Activated naive CD4-positive, alpha-beta T cell treated with anti-CD3 and anti-CD28 coated beads for 36 hours (primary cell): ENCODE measurements at regions of chr9 and their contacts with region 1.

Region 1: DNA sequence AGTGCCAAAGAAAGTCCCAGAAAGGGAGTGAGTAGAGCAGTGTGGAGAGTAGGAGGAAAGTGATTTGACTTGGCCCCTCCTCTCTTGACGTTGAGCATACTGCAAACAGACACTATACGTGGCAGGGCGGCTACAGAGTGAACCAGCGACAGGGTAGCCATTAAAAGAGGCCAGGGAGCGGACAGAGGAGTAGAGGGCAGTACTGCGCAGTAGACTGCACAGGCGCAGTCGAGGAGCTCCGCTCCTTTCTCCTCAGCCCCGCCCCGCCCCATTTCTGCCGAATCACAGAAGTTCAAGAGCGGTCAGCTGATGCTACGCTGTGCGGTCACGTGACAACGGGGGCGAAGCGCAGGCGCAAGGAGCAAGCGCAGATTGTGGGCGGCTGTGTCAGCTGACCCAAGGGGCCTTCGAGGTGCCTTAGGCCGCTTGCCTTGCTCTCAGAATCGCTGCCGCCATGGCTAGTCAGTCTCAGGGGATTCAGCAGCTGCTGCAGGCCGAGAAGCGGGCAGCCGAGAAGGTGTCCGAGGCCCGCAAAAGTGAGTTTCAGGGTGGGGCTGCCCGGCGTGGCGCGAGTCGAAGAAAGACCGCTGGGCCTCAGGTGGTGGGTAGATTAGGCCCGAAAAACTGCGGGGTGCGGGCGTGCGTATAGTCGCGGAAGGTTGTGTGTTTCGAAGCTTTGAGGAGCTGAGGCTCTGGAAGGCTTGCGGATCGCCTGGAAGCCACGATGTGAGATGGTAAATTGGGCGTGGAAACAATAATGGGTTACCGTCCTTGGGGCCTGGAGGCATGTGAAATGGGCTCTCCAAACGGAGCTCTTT is at the start of gene ATP6V1G1:
- DNase-seq: peak; percentile 100
- H3K4me3 Mint-ChIP-seq: peak within 1 kb of the TSS; percentile 92
- H3K27ac Mint-ChIP-seq: peak within 1 kb of the TSS; percentile 96
- H3K4me1 Mint-ChIP-seq: peaks cover 43% of the 10 kb centered on the region
- H3K27me3 Mint-ChIP-seq: no peaks in the 10 kb centered on the region
- total RNA-seq, gene ATP6V1G1: 26.7 to 28.8 TPM

Region 2: GRCh38 chr9:114348906-114349482 is 238.6 kb before region 1 on chr9:
- CTCF ChIA-PET with region 1: no interaction called
- intact Hi-C with region 1: loop called (anchors 1 kb)
- DNase-seq: peak; percentile 98
- H3K4me3 Mint-ChIP-seq: peak overlapping the region; percentile 24
- H3K27ac Mint-ChIP-seq: peak overlapping the region; percentile 98
- H3K4me1 Mint-ChIP-seq: peaks cover 49% of the 10 kb centered on the region
- H3K27me3 Mint-ChIP-seq: no peaks in the 10 kb centered on the region

Region 3: DNA sequence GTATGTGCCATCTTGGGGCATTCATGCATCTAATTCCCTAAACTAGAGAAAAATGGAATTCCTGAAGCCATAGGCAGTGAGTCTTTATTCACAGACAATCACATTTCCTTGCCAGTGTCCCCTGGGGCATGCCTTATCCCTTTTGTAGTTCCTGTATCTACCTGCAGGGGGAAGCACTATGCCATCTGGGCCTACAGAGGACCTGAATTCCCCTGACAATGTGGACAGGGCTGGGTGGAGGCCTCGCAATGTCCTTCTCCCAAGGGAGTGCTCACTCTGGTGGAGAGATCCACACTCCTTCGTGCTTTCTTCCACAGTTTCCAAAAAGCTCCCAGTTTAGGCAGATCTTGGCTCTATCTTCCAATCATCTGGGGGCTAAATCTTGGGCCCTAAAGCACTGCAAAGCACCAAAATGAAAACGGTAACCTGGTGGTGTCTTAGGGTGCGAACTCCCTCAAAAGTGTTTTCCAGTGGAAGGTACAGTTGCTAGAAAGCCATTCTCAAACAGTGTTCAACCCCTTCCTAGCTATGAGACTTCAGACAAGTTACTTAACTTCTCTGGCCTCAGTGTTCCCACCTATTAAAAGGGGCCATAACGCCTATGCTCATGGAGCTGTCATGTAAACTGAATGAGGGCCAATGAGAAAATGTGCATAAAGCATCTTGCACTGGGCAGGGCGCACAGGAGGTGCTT is 99.8 kb before region 1 on chr9:
- CTCF ChIA-PET with region 1: interaction called, 10 read pairs
- intact Hi-C with region 1: loop called (anchors 2 kb)
- DNase-seq: peak; percentile 81
- H3K4me3 Mint-ChIP-seq: no peak overlapping the region
- H3K27ac Mint-ChIP-seq: no peak overlapping the region
- H3K4me1 Mint-ChIP-seq: peaks cover 19% of the 10 kb centered on the region
- H3K27me3 Mint-ChIP-seq: no peaks in the 10 kb centered on the region

Region 4: DNA sequence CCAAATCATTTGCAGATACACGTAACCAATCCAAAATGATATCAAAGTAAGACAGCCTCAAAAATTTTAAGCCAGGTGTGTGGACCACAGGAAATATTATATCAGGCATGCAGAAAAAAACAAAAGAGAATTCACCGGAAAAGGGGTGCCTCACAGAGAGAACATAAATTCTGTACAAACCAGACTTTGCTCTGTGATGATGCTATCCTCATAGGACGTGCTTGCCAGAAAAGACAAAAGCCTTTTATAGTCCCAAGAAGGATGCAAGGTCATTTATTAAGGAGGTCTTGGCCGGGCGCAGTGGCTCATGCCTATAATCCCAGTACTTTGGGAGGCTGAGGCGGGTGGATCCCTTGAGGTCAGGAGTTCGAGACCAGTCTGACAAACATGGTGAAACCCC is 16.9 kb before region 1 on chr9:
- CTCF ChIA-PET with region 1: no interaction called
- intact Hi-C with region 1: no loop called
- DNase-seq: no peak
- H3K4me3 Mint-ChIP-seq: no peak overlapping the region
- H3K27ac Mint-ChIP-seq: no peak overlapping the region
- H3K4me1 Mint-ChIP-seq: no peaks in the 10 kb centered on the region
- H3K27me3 Mint-ChIP-seq: no peaks in the 10 kb centered on the region

Region 5: DNA sequence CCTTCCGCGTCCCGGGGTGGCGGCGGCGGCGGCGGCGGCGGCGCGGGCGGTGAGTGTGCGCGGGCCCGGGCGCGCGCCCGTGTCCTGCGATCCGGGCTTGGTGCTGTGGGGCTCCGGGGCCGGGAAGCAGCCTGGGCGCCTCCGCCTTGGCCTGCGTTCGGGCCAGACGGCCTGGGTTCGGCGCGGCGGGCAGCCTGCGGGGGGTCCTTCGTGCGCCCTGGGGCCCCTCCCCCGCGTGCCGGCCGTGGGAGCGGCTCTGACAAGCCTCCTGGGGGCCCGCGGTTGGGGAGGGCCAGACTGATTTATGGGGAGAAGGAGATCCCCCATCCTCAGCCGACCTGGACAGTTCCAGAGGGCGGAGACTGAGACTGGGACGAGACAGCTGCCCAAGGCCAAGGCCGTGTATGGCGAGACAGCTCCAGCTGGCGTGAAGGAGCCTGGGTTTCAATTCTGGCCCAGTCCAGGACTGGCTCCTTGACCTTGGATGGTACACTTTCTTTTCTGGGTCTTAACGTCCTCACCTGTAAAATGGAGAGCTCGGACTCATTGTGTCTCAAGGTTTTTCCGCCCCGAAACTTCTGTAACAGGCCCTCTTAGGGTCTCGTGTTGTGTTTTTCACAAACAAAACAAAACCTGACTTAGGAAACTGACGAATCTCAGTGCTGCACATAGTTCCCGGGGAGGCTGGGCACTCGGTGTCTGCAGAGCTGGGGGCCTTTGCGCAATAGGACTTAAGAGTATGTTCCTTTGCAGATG is 24.1 kb after region 1 on chr9:
- CTCF ChIA-PET with region 1: interaction called, 18 read pairs
- intact Hi-C with region 1: loop called (anchors 1 kb)
- DNase-seq: peak; percentile 37
- H3K4me3 Mint-ChIP-seq: peak overlapping the region; percentile 79
- H3K27ac Mint-ChIP-seq: peak overlapping the region; percentile 82
- H3K4me1 Mint-ChIP-seq: peaks cover 52% of the 10 kb centered on the region
- H3K27me3 Mint-ChIP-seq: no peaks in the 10 kb centered on the region

Region 6: GRCh38 chr9:114906908-114907571 is 319.4 kb after region 1 on chr9:
- CTCF ChIA-PET with region 1: no interaction called
- intact Hi-C with region 1: loop called (anchors 10 kb)
- DNase-seq: peak; percentile 46
- H3K4me3 Mint-ChIP-seq: no peak overlapping the region
- H3K27ac Mint-ChIP-seq: peak overlapping the region; percentile 98
- H3K4me1 Mint-ChIP-seq: peaks cover 54% of the 10 kb centered on the region
- H3K27me3 Mint-ChIP-seq: no peaks in the 10 kb centered on the region

Region 7: DNA sequence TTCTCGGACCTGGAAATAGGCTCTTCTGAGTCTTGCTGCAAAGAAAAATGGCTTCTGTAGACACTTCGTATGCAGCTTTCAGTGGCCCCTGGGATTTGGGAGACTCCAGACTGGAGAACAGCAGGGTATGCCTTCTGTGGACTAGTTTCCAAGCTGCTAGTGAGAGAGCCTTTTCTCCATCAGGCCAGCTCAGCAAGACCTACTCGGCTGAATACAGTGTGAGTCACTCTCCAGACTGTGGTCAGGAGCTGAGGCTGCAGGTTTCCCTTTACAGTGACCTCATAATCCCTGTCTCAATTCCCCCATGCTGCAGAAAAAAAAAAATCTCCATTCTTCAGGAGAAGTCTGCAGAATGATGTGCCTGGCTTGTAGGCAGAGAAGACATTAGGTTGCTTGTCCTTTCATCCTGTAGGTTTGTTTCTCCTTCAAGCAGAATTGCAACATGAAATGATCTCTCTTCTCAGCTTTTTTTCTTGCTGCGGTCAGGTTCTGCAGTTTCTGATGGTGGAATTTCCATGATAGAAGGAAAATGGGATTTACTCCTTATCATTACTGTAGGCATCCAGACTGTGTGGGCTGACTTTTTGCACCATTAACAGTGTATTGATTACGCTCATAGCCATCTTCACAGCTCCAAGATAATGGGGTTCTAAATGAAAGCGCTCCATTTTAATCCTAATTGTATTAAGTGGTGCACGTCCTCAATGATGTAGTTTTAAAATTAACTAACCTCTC is 421.1 kb after region 1 on chr9:
- CTCF ChIA-PET with region 1: no interaction called
- intact Hi-C with region 1: loop called (anchors 5 kb)
- DNase-seq: peak; percentile 41
- H3K4me3 Mint-ChIP-seq: no peak overlapping the region
- H3K27ac Mint-ChIP-seq: no peak overlapping the region
- H3K4me1 Mint-ChIP-seq: peaks cover 81% of the 10 kb centered on the region
- H3K27me3 Mint-ChIP-seq: no peaks in the 10 kb centered on the region

Region 8: DNA sequence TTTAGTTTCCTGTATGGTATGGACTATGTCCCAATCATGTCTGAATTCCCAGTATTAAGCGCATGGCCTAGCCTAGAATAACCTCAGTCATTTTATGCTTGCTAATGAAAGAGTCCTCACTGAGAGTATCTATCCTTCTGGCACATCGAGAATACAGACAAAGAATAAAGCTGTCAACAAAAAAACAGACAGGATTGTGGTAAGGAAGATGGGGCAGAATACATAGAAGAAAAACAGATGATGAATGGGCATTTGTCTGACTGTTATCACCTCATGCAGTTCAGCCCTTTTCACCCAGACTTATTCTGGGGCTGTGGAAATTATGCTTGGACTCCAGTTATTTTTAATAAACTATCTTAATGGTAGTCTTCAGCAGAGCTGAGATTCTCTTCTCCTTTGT is 894.2 kb after region 1 on chr9:
- CTCF ChIA-PET with region 1: no interaction called
- intact Hi-C with region 1: no loop called
- DNase-seq: no peak
- H3K4me3 Mint-ChIP-seq: no peak overlapping the region
- H3K27ac Mint-ChIP-seq: no peak overlapping the region
- H3K4me1 Mint-ChIP-seq: no peaks in the 10 kb centered on the region
- H3K27me3 Mint-ChIP-seq: peaks cover 4% of the 10 kb centered on the region